ENCODE measurements at regions of chr5 and their contacts with region 1.

Region 1: GRCh38 chr5:122163121-122164069 is 34.0 kb downstream of the ZNF474 start:
- DNase-seq: peak; percentile 92
- H3K4me3 Mint-ChIP-seq: peak overlapping the region; percentile 22
- H3K27ac Mint-ChIP-seq: peak overlapping the region; percentile 81
- H3K4me1 Mint-ChIP-seq: peaks cover 23% of the 10 kb centered on the region
- H3K27me3 Mint-ChIP-seq: no peaks in the 10 kb centered on the region
- CTCF ChIP-seq: no peak

Region 2: GRCh38 chr5:121962347-121962670 is 201.1 kb before region 1 on chr5:
- CTCF ChIA-PET with region 1: interaction called, 8 read pairs
- POLR2A ChIA-PET with region 1: interaction called, 29 read pairs
- intact Hi-C with region 1: loop called (anchors 2 kb)
- DNase-seq: no peak
- H3K4me3 Mint-ChIP-seq: peak overlapping the region; percentile 78
- H3K27ac Mint-ChIP-seq: peak overlapping the region; percentile 96
- H3K4me1 Mint-ChIP-seq: peaks cover 13% of the 10 kb centered on the region
- H3K27me3 Mint-ChIP-seq: no peaks in the 10 kb centered on the region
- CTCF ChIP-seq: no peak

Region 3: GRCh38 chr5:122101636-122102285 is 61.6 kb before region 1 on chr5:
- CTCF ChIA-PET with region 1: interaction called, 237 read pairs
- POLR2A ChIA-PET with region 1: interaction called, 9 read pairs
- intact Hi-C with region 1: no loop called
- DNase-seq: peak; percentile 76
- H3K4me3 Mint-ChIP-seq: no peak overlapping the region
- H3K27ac Mint-ChIP-seq: peak overlapping the region; percentile 35
- H3K4me1 Mint-ChIP-seq: peaks cover 19% of the 10 kb centered on the region
- H3K27me3 Mint-ChIP-seq: no peaks in the 10 kb centered on the region
- CTCF ChIP-seq: peak; percentile 67

Region 4: DNA sequence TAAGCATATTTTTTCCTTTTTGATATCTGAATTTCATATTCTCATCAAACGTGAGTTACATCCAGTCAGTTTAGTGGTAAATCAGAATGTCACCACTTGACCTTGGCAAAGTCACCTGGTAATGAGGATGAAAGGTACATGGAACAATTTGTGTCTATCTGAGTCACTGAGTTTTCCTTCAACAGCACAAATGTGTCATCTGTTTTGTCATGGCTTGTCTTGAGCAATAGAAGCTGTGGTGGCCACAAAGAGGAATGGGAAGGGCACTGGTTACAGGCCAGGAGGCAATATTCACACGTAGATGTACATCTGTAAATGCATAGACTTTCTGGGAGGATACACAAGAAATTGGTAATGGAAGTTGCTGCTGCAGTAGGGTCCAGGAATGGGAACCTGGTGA is 42.4 kb before region 1 on chr5:
- CTCF ChIA-PET with region 1: interaction called, 55 read pairs
- POLR2A ChIA-PET with region 1: interaction called, 25 read pairs
- intact Hi-C with region 1: loop called (anchors 2 kb)
- DNase-seq: peak; percentile 71
- H3K4me3 Mint-ChIP-seq: peak overlapping the region; percentile 45
- H3K27ac Mint-ChIP-seq: peak overlapping the region; percentile 90
- H3K4me1 Mint-ChIP-seq: peaks cover 30% of the 10 kb centered on the region
- H3K27me3 Mint-ChIP-seq: no peaks in the 10 kb centered on the region
- CTCF ChIP-seq: no peak

Region 5: DNA sequence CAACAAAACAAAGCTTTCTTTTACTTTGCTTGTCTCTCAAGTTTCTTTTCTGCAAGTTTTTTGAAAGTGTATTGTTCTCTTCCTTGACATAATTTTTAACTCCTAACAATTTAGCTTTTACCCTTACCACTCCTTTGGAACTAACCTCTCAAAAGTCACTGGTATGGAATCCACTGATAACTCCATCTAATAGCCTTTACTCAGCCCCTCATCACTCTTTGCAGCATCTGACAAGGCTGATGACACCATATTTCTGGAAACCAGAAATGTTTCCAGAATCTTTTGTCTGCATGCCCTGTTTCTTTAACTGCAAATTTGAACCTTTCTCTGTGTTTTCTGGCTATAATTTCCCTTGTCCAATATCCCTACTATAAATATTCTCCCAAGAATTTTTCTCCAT is 12.5 kb after region 1 on chr5:
- CTCF ChIA-PET with region 1: interaction called, 23 read pairs
- POLR2A ChIA-PET with region 1: interaction called, 140 read pairs
- intact Hi-C with region 1: no loop called
- DNase-seq: no peak
- H3K4me3 Mint-ChIP-seq: no peak overlapping the region
- H3K27ac Mint-ChIP-seq: no peak overlapping the region
- H3K4me1 Mint-ChIP-seq: peaks cover 5% of the 10 kb centered on the region
- H3K27me3 Mint-ChIP-seq: no peaks in the 10 kb centered on the region
- CTCF ChIP-seq: no peak

Region 6: DNA sequence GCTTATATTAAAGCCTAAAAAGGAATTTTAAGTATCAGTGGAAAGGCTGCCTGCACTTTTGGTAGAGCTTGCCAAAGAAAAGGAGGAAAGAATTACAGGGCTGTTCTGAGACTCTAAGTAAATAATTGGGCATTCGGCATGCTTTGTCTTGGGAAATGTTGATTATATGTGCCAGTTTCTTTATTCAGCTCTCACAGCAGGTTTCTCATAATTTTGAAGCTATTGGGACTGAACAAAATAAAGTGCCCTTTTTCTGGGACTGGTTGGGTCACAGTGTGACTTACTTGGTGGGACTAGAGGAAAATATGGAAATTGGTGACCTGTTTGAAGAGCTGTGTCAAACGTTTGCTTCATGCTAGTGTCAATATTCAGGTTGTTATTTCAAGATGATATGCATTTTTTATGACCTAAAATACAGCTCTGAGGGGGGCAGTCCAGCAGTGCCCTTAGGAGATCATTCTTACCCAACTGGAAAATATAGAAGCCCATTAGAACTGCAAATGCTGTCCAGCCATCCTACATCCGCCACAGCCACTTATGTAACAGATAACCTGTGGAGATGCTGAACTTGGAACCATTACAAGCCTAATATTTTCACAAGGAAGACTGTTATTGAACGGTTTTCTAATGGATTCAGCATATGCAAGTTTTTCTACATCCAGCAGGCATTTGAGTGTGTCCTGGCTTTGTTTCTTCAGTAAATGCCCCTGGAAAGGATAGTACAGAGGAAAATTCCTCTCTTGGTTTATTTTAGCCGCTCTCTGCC is 271.0 kb after region 1 on chr5:
- CTCF ChIA-PET with region 1: no interaction called
- POLR2A ChIA-PET with region 1: no interaction called
- intact Hi-C with region 1: no loop called
- DNase-seq: no peak
- H3K4me3 Mint-ChIP-seq: no peak overlapping the region
- H3K27ac Mint-ChIP-seq: no peak overlapping the region
- H3K4me1 Mint-ChIP-seq: no peaks in the 10 kb centered on the region
- H3K27me3 Mint-ChIP-seq: peaks cover 12% of the 10 kb centered on the region
- CTCF ChIP-seq: no peak